CD8-positive, alpha-beta T cell (primary cell): ENCODE measurements at regions of chr20 and their contacts with region 1.

Region 1: GRCh38 chr20:18287915-18288748 is at the start of gene ZNF133:
- DNase-seq: peak; percentile 94 to 100 (median 96)
- ATAC-seq: peak; percentile 91
- H3K4me3 ChIP-seq: peak within 1 kb of the TSS; percentile 74 to 95
- H3K4me3 Mint-ChIP-seq: peak within 1 kb of the TSS; percentile 96
- H3K27ac ChIP-seq: peak within 1 kb of the TSS; percentile 94 to 96
- H3K27ac Mint-ChIP-seq: peak within 1 kb of the TSS; percentile 99
- H3K4me1 ChIP-seq: peaks cover 16% of the 10 kb centered on the region
- H3K4me1 Mint-ChIP-seq: peaks cover 37% of the 10 kb centered on the region
- H3K27me3 ChIP-seq: peaks cover 0 to 2% of the 10 kb centered on the region in 2 experiments
- H3K27me3 Mint-ChIP-seq: peaks cover 14% of the 10 kb centered on the region
- CTCF ChIP-seq: no peak
- total RNA-seq, gene ZNF133: 2.2 to 2.7 TPM

Region 2: GRCh38 chr20:17504898-17505635 is 783.1 kb before region 1 on chr20:
- CTCF ChIA-PET with region 1: no interaction called
- POLR2A ChIA-PET with region 1: no interaction called
- intact Hi-C with region 1: loop called in 1 of 2 experiments (anchors 5 kb)
- DNase-seq: peak; percentile 13 to 84 (median 48)
- ATAC-seq: peak; percentile 72
- H3K4me3 ChIP-seq: peak overlapping the region; percentile 56 to 61
- H3K4me3 Mint-ChIP-seq: peak overlapping the region; percentile 89
- H3K27ac ChIP-seq: peak overlapping the region in 1 of 2 experiments; percentile 64
- H3K27ac Mint-ChIP-seq: peak overlapping the region; percentile 89
- H3K4me1 ChIP-seq: peaks cover 24% of the 10 kb centered on the region
- H3K4me1 Mint-ChIP-seq: peaks cover 36% of the 10 kb centered on the region
- H3K27me3 ChIP-seq: no peaks in the 10 kb centered on the region
- H3K27me3 Mint-ChIP-seq: no peaks in the 10 kb centered on the region
- CTCF ChIP-seq: peak; percentile 84

Region 3: DNA sequence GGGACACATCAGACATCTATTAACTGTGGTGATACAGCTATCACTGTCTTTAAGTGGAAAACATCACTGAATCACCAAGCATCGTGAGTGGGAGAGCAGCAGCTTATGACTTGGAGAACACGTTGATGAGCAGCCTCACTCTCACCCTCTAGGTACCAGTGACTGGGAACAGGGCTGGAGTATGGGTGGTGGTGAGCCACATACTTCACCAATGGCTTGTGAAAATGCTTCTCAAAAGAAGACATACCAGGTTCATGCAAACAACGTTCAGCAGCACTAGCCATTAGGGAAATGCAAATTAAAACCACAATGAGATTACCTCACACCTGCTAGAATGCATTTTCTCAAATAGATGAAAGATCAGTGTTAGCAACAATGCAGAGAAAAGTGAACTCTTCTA is 344.8 kb before region 1 on chr20:
- CTCF ChIA-PET with region 1: no interaction called
- POLR2A ChIA-PET with region 1: no interaction called
- intact Hi-C with region 1: no loop called
- DNase-seq: no peak
- ATAC-seq: no peak
- H3K4me3 ChIP-seq: no peak overlapping the region
- H3K4me3 Mint-ChIP-seq: no peak overlapping the region
- H3K27ac ChIP-seq: no peak overlapping the region
- H3K27ac Mint-ChIP-seq: peak overlapping the region; percentile 21
- H3K4me1 ChIP-seq: peaks cover 12% of the 10 kb centered on the region
- H3K4me1 Mint-ChIP-seq: peaks cover 14% of the 10 kb centered on the region
- H3K27me3 ChIP-seq: no peaks in the 10 kb centered on the region
- H3K27me3 Mint-ChIP-seq: no peaks in the 10 kb centered on the region
- CTCF ChIP-seq: no peak

Region 4: DNA sequence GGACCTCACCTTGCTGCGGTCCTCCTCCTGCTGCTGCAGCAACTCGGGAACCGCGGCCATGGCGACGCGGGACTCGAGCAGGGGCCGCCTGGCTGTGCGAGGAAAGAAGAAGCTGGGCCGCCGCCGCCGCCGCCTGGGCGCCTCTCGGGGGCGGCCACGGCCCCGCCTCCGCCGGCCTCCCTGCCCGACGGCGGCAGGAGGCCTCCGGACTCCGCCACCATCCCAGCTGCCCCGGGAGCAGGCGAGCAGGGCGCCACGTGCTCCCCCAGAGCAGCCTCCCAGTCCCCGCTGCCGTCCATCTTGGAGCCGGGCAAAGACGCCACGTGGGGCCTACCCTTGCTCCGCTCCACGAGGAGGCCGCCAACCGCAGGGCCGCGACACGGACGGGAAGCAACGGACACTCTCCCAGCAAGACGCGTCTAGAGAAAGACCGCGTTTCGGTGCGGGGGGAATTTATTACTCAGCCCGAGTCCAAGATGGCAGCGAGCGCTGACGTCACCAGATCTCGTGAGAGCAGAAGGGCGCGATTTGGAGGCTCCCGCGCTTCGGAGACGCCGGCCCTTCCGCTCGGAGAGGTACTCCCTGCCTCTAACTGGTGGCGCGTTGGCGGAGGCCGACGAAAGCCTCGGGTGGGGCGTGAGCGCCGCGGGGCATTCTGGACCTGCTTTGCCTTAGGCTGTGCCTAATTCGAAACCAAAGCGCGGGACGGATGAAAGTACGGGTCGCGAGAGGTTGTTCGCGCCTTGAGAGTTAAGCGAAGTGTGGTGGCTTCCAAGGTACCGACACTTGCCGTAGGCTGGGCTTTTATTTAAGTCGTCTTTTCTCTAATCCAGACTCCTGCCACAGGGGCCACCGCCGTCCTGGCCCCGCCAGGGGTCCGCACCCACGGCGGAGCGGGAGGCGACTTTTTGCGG is 319.5 kb before region 1 on chr20 and contains the starts of genes MGME1 and SNX5:
- CTCF ChIA-PET with region 1: no interaction called
- POLR2A ChIA-PET with region 1: interaction called, 3 read pairs
- intact Hi-C with region 1: loop called in 1 of 2 experiments (anchors 1 kb)
- DNase-seq: peak; percentile 97 to 99 (median 98)
- ATAC-seq: peak; percentile 89
- H3K4me3 ChIP-seq: peak within 1 kb of the TSS; percentile 91 to 99
- H3K4me3 Mint-ChIP-seq: peak within 1 kb of the TSS; percentile 97
- H3K27ac ChIP-seq: peak within 1 kb of the TSS; percentile 91 to 99
- H3K27ac Mint-ChIP-seq: peak within 1 kb of the TSS; percentile 98
- H3K4me1 ChIP-seq: peaks cover 63% of the 10 kb centered on the region
- H3K4me1 Mint-ChIP-seq: peaks cover 78% of the 10 kb centered on the region
- H3K27me3 ChIP-seq: no peaks in the 10 kb centered on the region
- H3K27me3 Mint-ChIP-seq: no peaks in the 10 kb centered on the region
- CTCF ChIP-seq: no peak
- total RNA-seq, gene MGME1: 4.5 to 4.7 TPM
- total RNA-seq, gene SNX5: 47.3 to 52.0 TPM

Region 5: GRCh38 chr20:18267815-18268214 is 20.3 kb before region 1 on chr20:
- CTCF ChIA-PET with region 1: no interaction called
- POLR2A ChIA-PET with region 1: no interaction called
- intact Hi-C with region 1: no loop called
- DNase-seq: no peak
- ATAC-seq: no peak
- H3K4me3 ChIP-seq: no peak overlapping the region
- H3K4me3 Mint-ChIP-seq: no peak overlapping the region
- H3K27ac ChIP-seq: no peak overlapping the region
- H3K27ac Mint-ChIP-seq: no peak overlapping the region
- H3K4me1 ChIP-seq: no peaks in the 10 kb centered on the region
- H3K4me1 Mint-ChIP-seq: no peaks in the 10 kb centered on the region
- H3K27me3 ChIP-seq: no peaks in the 10 kb centered on the region
- H3K27me3 Mint-ChIP-seq: peaks cover 24% of the 10 kb centered on the region
- CTCF ChIP-seq: no peak

Region 6: GRCh38 chr20:18304585-18304984 is 16.5 kb after region 1 on chr20:
- CTCF ChIA-PET with region 1: no interaction called
- POLR2A ChIA-PET with region 1: no interaction called
- intact Hi-C with region 1: no loop called
- DNase-seq: no peak
- ATAC-seq: no peak
- H3K4me3 ChIP-seq: no peak overlapping the region
- H3K4me3 Mint-ChIP-seq: no peak overlapping the region
- H3K27ac ChIP-seq: no peak overlapping the region
- H3K27ac Mint-ChIP-seq: no peak overlapping the region
- H3K4me1 ChIP-seq: no peaks in the 10 kb centered on the region
- H3K4me1 Mint-ChIP-seq: no peaks in the 10 kb centered on the region
- H3K27me3 ChIP-seq: no peaks in the 10 kb centered on the region
- H3K27me3 Mint-ChIP-seq: no peaks in the 10 kb centered on the region
- CTCF ChIP-seq: no peak

Region 7: DNA sequence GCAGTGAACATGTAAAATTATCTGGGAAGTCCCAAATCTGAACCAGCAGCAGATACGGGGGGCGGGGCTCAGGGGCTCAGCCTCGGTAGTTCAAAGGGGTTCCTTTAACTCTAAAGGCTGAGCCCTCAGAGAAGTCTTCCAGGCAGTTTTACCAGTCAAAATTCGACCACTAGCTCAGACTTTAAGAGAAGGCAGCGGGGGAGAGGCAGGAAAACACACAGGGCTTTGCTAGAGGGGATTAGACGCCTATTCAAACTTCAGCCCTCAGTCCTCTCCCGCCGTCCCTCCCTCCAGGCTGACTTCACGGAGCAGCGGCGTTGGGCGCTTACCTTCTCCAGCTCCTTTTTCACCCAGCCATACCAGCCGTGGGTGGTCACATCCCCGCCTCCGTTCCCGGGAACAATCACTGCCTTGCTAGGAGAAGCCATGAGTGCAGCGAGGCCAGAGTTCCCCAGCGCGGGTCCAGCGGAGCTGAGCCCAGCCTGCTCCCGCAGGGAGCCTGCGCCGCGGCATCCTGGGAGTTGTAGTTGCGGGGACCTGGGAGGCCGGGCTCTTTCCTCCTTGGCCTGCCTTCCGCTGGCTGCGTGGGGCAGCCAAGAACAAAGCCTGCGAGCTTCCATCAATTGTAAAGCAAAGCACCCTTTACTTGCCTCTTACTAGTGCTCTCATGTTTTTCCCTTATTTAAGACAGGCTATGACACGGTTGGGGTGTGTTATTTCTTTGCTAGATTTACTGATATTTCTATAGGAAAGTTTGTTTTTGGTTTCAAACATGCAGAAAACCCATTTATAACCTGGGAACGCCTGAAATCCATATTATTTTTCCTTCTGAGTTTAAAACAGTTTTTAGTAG is 208.8 kb after region 1 on chr20 and contains the start of gene RBBP9:
- CTCF ChIA-PET with region 1: no interaction called
- POLR2A ChIA-PET with region 1: interaction called, 6 read pairs
- intact Hi-C with region 1: loop called in 1 of 2 experiments (anchors 1 kb)
- DNase-seq: peak; percentile 31 to 86 (median 75)
- ATAC-seq: peak; percentile 98
- H3K4me3 ChIP-seq: peak within 1 kb of the TSS; percentile 77 to 93
- H3K4me3 Mint-ChIP-seq: peak within 1 kb of the TSS; percentile 96
- H3K27ac ChIP-seq: peak within 1 kb of the TSS; percentile 50 to 62
- H3K27ac Mint-ChIP-seq: peak within 1 kb of the TSS; percentile 90
- H3K4me1 ChIP-seq: peaks cover 16% of the 10 kb centered on the region
- H3K4me1 Mint-ChIP-seq: peaks cover 20% of the 10 kb centered on the region
- H3K27me3 ChIP-seq: no peaks in the 10 kb centered on the region
- H3K27me3 Mint-ChIP-seq: no peaks in the 10 kb centered on the region
- CTCF ChIP-seq: no peak
- total RNA-seq, gene RBBP9: 2.1 to 2.3 TPM

Region 8: DNA sequence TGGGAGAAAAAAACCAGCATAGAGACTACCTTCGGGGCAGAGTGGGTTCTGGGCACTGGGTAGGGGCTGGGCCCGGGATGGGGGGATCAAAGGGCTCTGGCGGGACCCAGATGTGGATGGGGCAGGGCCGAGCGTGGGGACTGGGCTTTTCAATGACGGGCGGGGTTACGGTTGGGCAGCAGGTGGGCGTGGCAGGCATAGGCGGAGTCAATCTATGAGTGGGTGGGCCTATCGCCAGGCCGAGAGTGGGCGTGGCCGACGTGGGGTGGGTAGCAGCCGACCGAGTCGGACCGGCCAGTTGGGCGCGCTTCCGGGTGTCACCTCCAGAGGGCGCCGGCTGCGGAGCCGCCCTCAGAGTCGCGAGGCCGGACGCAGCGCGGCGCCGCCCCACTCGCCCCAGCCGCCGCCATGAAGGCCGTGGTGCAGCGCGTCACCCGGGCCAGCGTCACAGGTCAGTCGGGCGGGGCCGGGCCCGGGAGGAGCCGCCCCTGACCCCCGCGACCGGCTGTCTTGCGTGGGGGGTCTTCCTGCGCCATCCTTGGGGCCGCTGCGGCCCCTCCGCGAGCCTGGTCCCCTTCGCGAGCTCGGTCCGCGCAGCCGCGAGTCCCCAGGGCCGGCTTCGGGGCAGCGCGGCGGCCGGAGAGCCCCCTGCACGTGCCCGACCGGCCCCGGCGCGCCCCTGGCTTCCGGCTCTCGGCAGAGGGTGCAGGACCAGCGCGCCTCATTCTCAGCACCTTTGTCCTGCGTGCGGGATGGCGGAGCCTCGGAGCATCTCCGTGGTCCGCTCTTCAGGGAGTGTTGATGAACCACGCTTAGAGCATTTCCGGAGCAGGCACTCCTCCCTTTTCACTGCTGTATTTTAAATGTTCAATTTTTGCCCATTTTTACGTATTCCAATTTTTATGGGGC is 299.8 kb after region 1 on chr20 and contains the start of gene DTD1:
- CTCF ChIA-PET with region 1: no interaction called
- POLR2A ChIA-PET with region 1: no interaction called
- intact Hi-C with region 1: loop called in 1 of 2 experiments (anchors 5 kb)
- DNase-seq: peak; percentile 53 to 89 (median 82)
- ATAC-seq: peak; percentile 82
- H3K4me3 ChIP-seq: peak within 1 kb of the TSS; percentile 65 to 83
- H3K4me3 Mint-ChIP-seq: peak within 1 kb of the TSS; percentile 95
- H3K27ac ChIP-seq: peak within 1 kb of the TSS; percentile 56 to 83
- H3K27ac Mint-ChIP-seq: peak within 1 kb of the TSS; percentile 94
- H3K4me1 ChIP-seq: peaks cover 18% of the 10 kb centered on the region
- H3K4me1 Mint-ChIP-seq: peaks cover 32% of the 10 kb centered on the region
- H3K27me3 ChIP-seq: no peaks in the 10 kb centered on the region
- H3K27me3 Mint-ChIP-seq: peaks cover 6% of the 10 kb centered on the region
- CTCF ChIP-seq: peak; percentile 45
- total RNA-seq, gene DTD1: 12.5 to 14.5 TPM

Region 9: GRCh38 chr20:20052074-20052970 is 1764.2 kb after region 1 on chr20 and contains the starts of genes CFAP61 and CRNKL1:
- CTCF ChIA-PET with region 1: no interaction called
- POLR2A ChIA-PET with region 1: interaction called, 3 read pairs
- intact Hi-C with region 1: loop called in 1 of 2 experiments (anchors 5 kb)
- DNase-seq: peak; percentile 93 to 99 (median 98)
- ATAC-seq: peak; percentile 94
- H3K4me3 ChIP-seq: peak within 1 kb of the TSS; percentile 86 to 96
- H3K4me3 Mint-ChIP-seq: peak within 1 kb of the TSS; percentile 99
- H3K27ac ChIP-seq: peak within 1 kb of the TSS; percentile 86 to 92
- H3K27ac Mint-ChIP-seq: peak within 1 kb of the TSS; percentile 98
- H3K4me1 ChIP-seq: peaks cover 12% of the 10 kb centered on the region
- H3K4me1 Mint-ChIP-seq: peaks cover 29% of the 10 kb centered on the region
- H3K27me3 ChIP-seq: no peaks in the 10 kb centered on the region
- H3K27me3 Mint-ChIP-seq: peaks cover 10% of the 10 kb centered on the region
- CTCF ChIP-seq: no peak
- total RNA-seq, gene CFAP61: not detected
- total RNA-seq, gene CRNKL1: 34.1 to 39.7 TPM